CD4-positive, alpha-beta memory T cell (primary cell): ENCODE measurements at regions of chr1 and their contacts with region 1.

Region 1: DNA sequence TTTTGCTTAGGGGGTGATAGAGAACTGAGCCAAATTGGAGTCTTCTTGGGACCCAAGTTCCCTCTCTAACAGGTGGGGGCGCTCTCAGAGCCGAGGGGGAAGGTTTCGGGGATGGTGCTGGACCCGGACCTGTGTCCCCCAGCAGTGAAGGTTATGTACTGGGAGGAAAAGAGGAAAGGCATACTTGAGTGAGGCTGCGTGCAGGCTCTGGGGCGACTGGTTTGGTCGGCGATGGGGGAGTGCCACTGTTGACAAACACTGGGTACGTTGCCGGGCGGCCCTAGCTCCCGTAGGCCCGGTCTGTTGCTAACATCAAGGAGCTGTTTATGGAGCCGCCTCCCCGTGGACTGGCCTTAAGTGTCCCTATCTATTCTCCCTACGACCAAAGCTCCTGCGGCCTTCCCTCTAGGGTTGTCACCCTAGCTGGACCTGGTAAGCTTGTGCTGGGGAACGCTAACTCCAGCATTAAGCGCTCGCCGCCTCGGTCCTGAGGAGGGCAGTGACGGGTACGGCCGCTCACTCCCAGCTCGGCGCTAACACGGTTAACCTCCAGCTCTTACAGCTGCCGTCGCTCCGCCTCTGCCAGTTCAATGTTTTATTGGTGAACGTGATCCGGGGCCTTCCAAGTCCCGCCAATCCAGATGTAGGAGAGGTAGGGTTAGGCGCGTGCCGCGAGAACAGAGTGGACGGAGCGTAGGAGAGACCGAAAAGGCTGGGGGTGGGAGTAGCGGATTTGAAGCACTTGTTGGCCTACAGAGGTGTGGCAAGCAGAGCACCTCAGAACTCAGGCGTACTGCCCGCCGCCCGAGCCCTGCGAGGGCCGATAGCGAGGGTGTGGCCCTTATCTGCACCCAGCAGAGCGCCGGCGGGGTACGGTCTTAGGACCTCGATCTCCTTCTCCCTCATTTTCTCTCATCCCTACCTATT is at the start of gene PPOX:
- DNase-seq: peak; percentile 95 to 98 (median 96)
- H3K4me3 ChIP-seq: peak within 1 kb of the TSS; percentile 73 to 77
- H3K4me3 Mint-ChIP-seq: peak within 1 kb of the TSS; percentile 89 to 96 (median 94)
- H3K27ac ChIP-seq: peak within 1 kb of the TSS; percentile 83
- H3K27ac Mint-ChIP-seq: peak within 1 kb of the TSS; percentile 96 to 100 (median 100)
- H3K4me1 ChIP-seq: peaks cover 37% of the 10 kb centered on the region
- H3K4me1 Mint-ChIP-seq: peaks cover 25 to 75% (median 45%) of the 10 kb centered on the region in 4 donors
- H3K27me3 ChIP-seq: no peaks in the 10 kb centered on the region
- H3K27me3 Mint-ChIP-seq: no peaks in the 10 kb centered on the region
- total RNA-seq, gene PPOX: 59.4 to 69.8 TPM

Region 2: GRCh38 chr1:161117759-161118581 is 48.0 kb before region 1 on chr1 and contains the starts of genes NIT1 and PFDN2:
- CTCF ChIA-PET with region 1: interaction called, 3 read pairs
- POLR2A ChIA-PET with region 1: interaction called, 12 read pairs
- intact Hi-C with region 1: no loop called
- DNase-seq: peak; percentile 83 to 87 (median 86)
- H3K4me3 ChIP-seq: peak within 1 kb of the TSS; percentile 32 to 95
- H3K4me3 Mint-ChIP-seq: peak within 1 kb of the TSS; percentile 94 to 98 (median 96)
- H3K27ac ChIP-seq: peak within 1 kb of the TSS; percentile 94
- H3K27ac Mint-ChIP-seq: peak within 1 kb of the TSS; percentile 94 to 99 (median 98)
- H3K4me1 ChIP-seq: peaks cover 64% of the 10 kb centered on the region
- H3K4me1 Mint-ChIP-seq: peaks cover 36 to 79% (median 61%) of the 10 kb centered on the region in 4 donors
- H3K27me3 ChIP-seq: no peaks in the 10 kb centered on the region
- H3K27me3 Mint-ChIP-seq: no peaks in the 10 kb centered on the region
- total RNA-seq, gene NIT1: 49.0 to 50.5 TPM
- total RNA-seq, gene PFDN2: 40.8 to 41.0 TPM

Region 3: DNA sequence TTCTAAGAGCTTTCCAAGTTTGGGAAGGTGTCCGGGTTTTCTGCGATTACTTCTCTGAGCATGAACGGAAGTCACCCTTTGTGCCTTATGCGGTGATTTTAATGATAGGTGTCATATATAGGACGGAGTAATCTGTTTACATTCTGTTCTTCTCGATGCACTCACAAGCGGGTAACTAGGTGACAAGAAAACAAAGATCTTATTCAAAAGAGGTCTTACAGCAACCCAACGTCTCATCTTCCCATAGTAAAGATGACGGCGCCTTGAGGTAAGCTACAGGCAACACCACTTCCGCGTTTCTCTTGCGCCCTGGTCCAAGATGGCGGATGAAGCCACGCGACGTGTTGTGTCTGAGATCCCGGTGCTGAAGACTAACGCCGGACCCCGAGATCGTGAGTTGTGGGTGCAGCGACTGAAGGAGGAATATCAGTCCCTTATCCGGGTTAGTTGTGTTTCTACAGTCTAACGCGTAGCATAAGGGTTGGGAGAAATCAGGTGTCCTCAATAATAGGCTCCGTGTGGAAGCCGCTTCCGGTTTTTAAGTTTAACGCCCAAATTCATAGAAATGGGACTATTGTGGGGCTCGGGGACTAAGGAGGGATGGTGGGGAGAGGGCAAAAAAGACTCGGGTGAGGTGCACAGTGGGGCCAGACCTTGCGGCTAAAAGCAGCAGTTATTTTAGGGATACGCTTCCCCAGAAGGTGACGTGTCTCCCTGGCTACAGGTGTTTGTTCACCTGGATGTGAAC is 12.2 kb before region 1 on chr1 and contains the start of gene UFC1:
- CTCF ChIA-PET with region 1: interaction called, 29 read pairs
- POLR2A ChIA-PET with region 1: interaction called, 67 read pairs
- intact Hi-C with region 1: no loop called
- DNase-seq: peak; percentile 87 to 93 (median 90)
- H3K4me3 ChIP-seq: peak within 1 kb of the TSS; percentile 37 to 100
- H3K4me3 Mint-ChIP-seq: peak within 1 kb of the TSS; percentile 96 to 100 (median 99)
- H3K27ac ChIP-seq: peak within 1 kb of the TSS; percentile 99
- H3K27ac Mint-ChIP-seq: peak within 1 kb of the TSS; percentile 99 to 100 (median 100)
- H3K4me1 ChIP-seq: peaks cover 23% of the 10 kb centered on the region
- H3K4me1 Mint-ChIP-seq: peaks cover 23 to 46% (median 32%) of the 10 kb centered on the region in 4 donors
- H3K27me3 ChIP-seq: no peaks in the 10 kb centered on the region
- H3K27me3 Mint-ChIP-seq: no peaks in the 10 kb centered on the region
- total RNA-seq, gene UFC1: 87.2 to 87.4 TPM

Region 4: DNA sequence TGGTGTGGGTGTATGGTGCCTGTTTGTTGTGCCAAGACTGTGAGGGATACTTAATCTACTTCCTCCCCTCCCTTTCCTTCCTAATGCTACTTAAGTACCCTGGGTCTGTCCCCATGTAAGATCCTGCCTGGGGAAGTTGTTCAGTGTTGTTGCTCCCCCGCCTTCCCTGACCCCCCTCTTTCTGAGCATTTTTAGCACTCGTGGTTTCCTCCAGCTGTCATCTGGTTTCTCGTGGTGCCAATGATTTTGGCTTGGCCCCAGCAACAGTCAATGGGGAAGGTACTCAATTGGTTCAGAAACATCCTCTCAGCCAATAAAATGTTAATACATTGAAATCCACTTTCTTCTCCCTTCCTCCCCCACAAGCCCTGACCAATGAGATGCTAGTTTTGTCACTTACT is 19.3 kb after region 1 on chr1:
- CTCF ChIA-PET with region 1: interaction called, 115 read pairs
- POLR2A ChIA-PET with region 1: interaction called, 132 read pairs
- intact Hi-C with region 1: loop called (anchors 1 kb)
- DNase-seq: peak; percentile 86 to 92 (median 88)
- H3K4me3 ChIP-seq: peak overlapping the region; percentile 8 to 25
- H3K4me3 Mint-ChIP-seq: peak overlapping the region; percentile 73 to 89 (median 83)
- H3K27ac ChIP-seq: peak overlapping the region; percentile 47
- H3K27ac Mint-ChIP-seq: peak overlapping the region; percentile 86 to 96 (median 92)
- H3K4me1 ChIP-seq: peaks cover 94% of the 10 kb centered on the region
- H3K4me1 Mint-ChIP-seq: peaks cover 57 to 88% (median 78%) of the 10 kb centered on the region in 4 donors
- H3K27me3 ChIP-seq: no peaks in the 10 kb centered on the region
- H3K27me3 Mint-ChIP-seq: no peaks in the 10 kb centered on the region

Region 5: DNA sequence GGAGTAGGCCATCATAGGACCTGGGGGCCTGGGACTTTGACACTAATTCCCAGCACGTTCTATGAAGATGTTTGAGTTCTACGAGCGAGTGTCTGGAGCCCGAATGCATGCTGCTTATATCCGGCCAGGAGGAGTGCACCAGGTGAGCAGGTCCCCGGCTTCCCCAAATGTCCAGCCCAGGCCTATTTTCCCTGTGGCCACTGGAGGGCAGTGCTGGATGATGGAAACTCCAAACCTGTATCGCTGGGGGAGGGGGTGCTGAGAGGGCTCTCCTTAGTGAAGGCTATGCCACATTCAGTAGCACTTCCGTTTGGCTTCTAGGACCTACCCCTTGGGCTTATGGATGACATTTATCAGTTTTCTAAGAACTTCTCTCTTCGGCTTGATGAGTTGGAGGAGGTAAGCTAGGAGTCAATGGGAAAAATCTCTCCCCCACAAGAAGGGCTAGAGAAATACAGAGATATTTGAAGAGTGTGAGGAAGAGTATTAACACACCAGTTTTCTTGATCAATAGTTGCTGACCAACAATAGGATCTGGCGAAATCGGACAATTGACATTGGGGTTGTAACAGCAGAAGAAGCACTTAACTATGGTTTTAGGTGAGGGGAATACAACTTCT is 43.9 kb after region 1 on chr1:
- CTCF ChIA-PET with region 1: interaction called, 45 read pairs
- POLR2A ChIA-PET with region 1: interaction called, 89 read pairs
- intact Hi-C with region 1: no loop called
- DNase-seq: peak; percentile 64 to 74 (median 68)
- H3K4me3 ChIP-seq: no peak overlapping the region
- H3K4me3 Mint-ChIP-seq: no peak overlapping the region
- H3K27ac ChIP-seq: no peak overlapping the region
- H3K27ac Mint-ChIP-seq: peak overlapping the region; percentile 57 to 88 (median 68)
- H3K4me1 ChIP-seq: peaks cover 25% of the 10 kb centered on the region
- H3K4me1 Mint-ChIP-seq: peaks cover 20 to 38% (median 27%) of the 10 kb centered on the region in 4 donors
- H3K27me3 ChIP-seq: no peaks in the 10 kb centered on the region
- H3K27me3 Mint-ChIP-seq: no peaks in the 10 kb centered on the region

Region 6: GRCh38 chr1:161305867-161306519 is 140.0 kb after region 1 on chr1:
- CTCF ChIA-PET with region 1: interaction called, 10 read pairs
- POLR2A ChIA-PET with region 1: interaction called, 11 read pairs
- intact Hi-C with region 1: no loop called
- DNase-seq: peak; percentile 89 to 92 (median 90)
- H3K4me3 ChIP-seq: peak overlapping the region; percentile 48 to 86
- H3K4me3 Mint-ChIP-seq: peak overlapping the region; percentile 89 to 100 (median 97)
- H3K27ac ChIP-seq: peak overlapping the region; percentile 77
- H3K27ac Mint-ChIP-seq: peak overlapping the region; percentile 91 to 99 (median 96)
- H3K4me1 ChIP-seq: peaks cover 29% of the 10 kb centered on the region
- H3K4me1 Mint-ChIP-seq: peaks cover 17 to 41% (median 29%) of the 10 kb centered on the region in 4 donors
- H3K27me3 ChIP-seq: no peaks in the 10 kb centered on the region
- H3K27me3 Mint-ChIP-seq: no peaks in the 10 kb centered on the region